Activated T-helper 1 cell treated with anti-CD3 and anti-CD28 coated beads, Interleukin-12 subunit alpha, Interleukin-12 subunit beta, Interleukin-2, Interleukin-4 antibody, amounts not matched to agents 30 ng/mL and 10 ng/mL and 1 ng/mL, durations not matched to agents 14 hours and 24 hours and 36 hours (primary cell): ENCODE measurements at regions of chr20 and their contacts with region 1.

Region 1: DNA sequence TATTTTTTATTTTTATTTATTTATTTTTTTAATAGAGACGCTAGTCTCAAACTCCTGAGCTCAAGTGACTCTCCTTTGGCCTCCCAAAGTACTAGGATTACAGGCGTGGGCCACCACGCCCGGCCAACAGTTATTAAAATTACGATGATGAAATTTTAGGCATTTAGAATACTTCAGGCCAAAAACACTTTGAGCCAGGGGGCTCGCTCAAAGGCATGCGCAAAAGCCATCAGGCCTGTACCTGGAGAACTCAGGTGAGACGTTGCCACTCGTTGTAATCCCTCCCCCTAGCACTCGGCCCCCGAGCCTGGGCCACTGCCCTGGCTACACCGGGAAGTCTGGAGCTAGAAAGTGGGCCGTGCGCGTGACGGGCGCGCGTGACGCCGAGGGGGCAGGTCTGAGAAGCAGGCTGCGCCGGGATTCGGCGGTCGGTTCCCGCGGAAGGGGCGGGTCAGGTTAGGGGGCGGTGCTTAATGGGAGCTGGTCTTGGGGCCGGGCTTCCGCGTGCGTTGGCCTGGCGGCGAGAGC is 337 bp upstream of the CBFA2T2 start:
- DNase-seq: peak; percentile 99
- H3K4me3 Mint-ChIP-seq: peak overlapping the region; percentile 88
- H3K27ac Mint-ChIP-seq: peak overlapping the region; percentile 85
- H3K4me1 Mint-ChIP-seq: peaks cover 9% of the 10 kb centered on the region
- H3K27me3 Mint-ChIP-seq: no peaks in the 10 kb centered on the region

Region 2: GRCh38 chr20:33401184-33401920 is 88.2 kb before region 1 on chr20 and contains the start of gene CDK5RAP1:
- intact Hi-C with region 1: loop called (anchors 2 kb)
- DNase-seq: peak; percentile 80
- H3K4me3 Mint-ChIP-seq: peak within 1 kb of the TSS; percentile 98
- H3K27ac Mint-ChIP-seq: peak within 1 kb of the TSS; percentile 91
- H3K4me1 Mint-ChIP-seq: peaks cover 30% of the 10 kb centered on the region
- H3K27me3 Mint-ChIP-seq: no peaks in the 10 kb centered on the region
- total RNA-seq, gene CDK5RAP1: 46.0 and 49.1 TPM in 2 replicates

Region 3: DNA sequence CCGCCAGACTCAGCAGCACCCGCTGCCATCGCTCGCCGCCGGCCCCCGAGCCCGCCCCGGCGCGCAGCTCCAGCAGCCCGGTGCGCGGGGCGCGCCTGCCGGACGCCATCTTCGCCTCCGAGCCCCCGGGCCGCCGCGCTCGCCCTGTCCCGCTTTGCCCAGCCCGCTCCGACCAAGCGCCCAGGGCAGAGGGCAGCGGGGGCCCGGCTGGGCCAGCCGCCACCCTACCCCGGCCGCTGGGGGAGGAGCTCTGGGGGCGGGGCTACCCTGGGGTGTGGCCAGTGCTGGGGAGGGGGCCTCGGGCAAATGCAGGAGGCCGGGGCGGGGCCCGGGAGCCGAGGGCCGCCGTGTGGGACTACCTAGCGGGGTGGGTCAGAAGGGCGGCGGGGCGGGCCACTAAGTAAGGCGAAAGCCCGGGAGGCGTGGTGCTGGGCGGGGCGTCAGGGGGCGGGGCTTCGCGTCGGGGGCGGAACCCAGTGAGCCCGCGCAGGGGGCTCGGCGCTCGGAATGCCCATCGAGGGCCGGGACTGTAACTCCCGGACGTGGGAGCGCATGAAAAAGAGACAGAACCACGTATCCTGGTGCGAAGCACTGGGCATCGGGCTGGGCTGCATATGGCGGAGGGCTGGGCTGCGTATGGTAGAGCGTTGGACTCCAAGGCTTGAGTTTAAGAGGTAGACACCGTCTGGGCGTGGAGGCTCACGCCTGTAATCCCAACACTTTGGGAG is 45.9 kb before region 1 on chr20 and contains the start of gene SNTA1:
- intact Hi-C with region 1: loop called (anchors 1 kb)
- DNase-seq: peak; percentile 82
- H3K4me3 Mint-ChIP-seq: peak within 1 kb of the TSS; percentile 88
- H3K27ac Mint-ChIP-seq: peak within 1 kb of the TSS; percentile 76
- H3K4me1 Mint-ChIP-seq: peaks cover 10% of the 10 kb centered on the region
- H3K27me3 Mint-ChIP-seq: peaks cover 11% of the 10 kb centered on the region
- total RNA-seq, gene SNTA1: 0.76 and 0.91 TPM in 2 replicates

Region 4: GRCh38 chr20:33554914-33555420 is 65.4 kb after region 1 on chr20:
- intact Hi-C with region 1: loop called (anchors 1 kb)
- DNase-seq: peak; percentile 47
- H3K4me3 Mint-ChIP-seq: peak overlapping the region; percentile 20
- H3K27ac Mint-ChIP-seq: peak overlapping the region; percentile 85
- H3K4me1 Mint-ChIP-seq: peaks cover 15% of the 10 kb centered on the region
- H3K27me3 Mint-ChIP-seq: no peaks in the 10 kb centered on the region

Region 5: GRCh38 chr20:33719989-33720709 is 230.6 kb after region 1 on chr20 and contains the start of gene PXMP4:
- intact Hi-C with region 1: loop called (anchors 2 kb)
- DNase-seq: peak; percentile 88
- H3K4me3 Mint-ChIP-seq: peak within 1 kb of the TSS; percentile 85
- H3K27ac Mint-ChIP-seq: peak within 1 kb of the TSS; percentile 93
- H3K4me1 Mint-ChIP-seq: peaks cover 30% of the 10 kb centered on the region
- H3K27me3 Mint-ChIP-seq: no peaks in the 10 kb centered on the region
- total RNA-seq, gene PXMP4: 7.3 and 7.9 TPM in 2 replicates

Region 6: DNA sequence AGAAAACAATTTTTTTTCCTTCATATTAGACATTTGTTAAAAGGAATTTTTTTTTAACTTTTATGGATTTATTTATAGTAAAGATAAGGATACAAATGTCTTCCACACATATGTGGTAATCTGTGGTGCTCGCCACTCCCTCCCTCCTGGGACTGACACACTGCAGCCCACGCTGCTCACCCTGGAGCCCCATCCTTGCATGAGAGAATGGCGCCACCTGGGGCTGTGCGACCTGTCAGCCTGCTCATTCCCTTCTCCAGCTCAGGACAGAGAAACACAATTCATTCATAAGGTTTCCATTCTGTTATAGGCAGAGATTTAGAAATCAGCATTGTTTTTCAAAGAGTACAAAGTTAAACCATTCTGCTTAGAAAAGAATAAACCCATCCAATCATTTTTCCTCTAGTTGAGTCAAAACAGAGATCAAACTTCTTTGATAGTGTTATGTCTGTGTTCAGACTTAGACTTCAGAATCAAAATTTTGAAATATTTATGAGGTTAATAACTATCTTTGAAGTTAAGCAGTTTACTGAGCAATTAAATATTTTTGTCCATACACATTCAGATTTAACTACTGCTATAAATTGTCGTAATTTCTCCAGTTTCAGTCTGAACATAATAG is 983.8 kb after region 1 on chr20:
- intact Hi-C with region 1: no loop called
- DNase-seq: no peak
- H3K4me3 Mint-ChIP-seq: no peak overlapping the region
- H3K27ac Mint-ChIP-seq: no peak overlapping the region
- H3K4me1 Mint-ChIP-seq: peaks cover 7% of the 10 kb centered on the region
- H3K27me3 Mint-ChIP-seq: no peaks in the 10 kb centered on the region